Activated CD4-positive, alpha-beta memory T cell treated with anti-CD3 and anti-CD28 coated beads for 36 hours (primary cell): ENCODE measurements at regions of chr1 and their contacts with region 1.

Region 1: DNA sequence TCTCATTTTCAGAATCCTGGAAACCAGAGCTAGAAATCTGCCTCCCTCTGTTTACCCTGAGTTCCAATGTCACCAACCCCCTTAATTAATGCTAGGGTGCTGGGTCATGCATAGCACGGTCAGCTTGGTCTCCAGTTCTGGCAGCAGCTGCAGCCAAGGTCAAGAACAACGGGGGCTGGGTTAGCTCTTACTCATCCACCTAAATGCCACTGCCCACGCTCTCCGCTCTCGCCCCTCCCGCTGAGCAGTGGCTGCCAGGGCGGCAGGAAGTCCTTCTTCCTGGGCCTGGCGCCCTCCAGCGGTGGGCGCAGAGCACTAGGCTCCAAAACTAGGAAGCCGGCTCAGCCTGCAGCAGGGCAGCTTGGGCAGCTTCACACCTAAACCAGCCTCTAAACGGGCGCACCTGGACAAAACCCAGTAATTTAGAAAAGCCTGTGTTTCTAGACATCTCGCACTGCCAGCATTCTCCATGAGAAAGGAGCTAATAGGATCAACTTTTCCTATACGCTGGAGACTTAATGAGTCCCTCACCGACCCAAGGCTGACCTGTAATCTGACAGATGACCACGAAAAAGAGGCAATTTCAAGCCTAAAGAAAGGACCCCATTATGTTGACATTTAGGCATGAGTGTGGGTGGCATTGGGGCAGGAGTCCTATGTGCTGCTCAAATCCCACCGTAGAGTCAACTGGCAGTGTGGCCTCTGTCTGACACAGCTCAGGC is 78.3 kb upstream of the LRRN2 start:
- DNase-seq: peak; percentile 88
- H3K4me3 Mint-ChIP-seq: no peak overlapping the region
- H3K27ac Mint-ChIP-seq: no peak overlapping the region
- H3K4me1 Mint-ChIP-seq: peaks cover 6% of the 10 kb centered on the region
- H3K27me3 Mint-ChIP-seq: peaks cover 9% of the 10 kb centered on the region

Region 2: DNA sequence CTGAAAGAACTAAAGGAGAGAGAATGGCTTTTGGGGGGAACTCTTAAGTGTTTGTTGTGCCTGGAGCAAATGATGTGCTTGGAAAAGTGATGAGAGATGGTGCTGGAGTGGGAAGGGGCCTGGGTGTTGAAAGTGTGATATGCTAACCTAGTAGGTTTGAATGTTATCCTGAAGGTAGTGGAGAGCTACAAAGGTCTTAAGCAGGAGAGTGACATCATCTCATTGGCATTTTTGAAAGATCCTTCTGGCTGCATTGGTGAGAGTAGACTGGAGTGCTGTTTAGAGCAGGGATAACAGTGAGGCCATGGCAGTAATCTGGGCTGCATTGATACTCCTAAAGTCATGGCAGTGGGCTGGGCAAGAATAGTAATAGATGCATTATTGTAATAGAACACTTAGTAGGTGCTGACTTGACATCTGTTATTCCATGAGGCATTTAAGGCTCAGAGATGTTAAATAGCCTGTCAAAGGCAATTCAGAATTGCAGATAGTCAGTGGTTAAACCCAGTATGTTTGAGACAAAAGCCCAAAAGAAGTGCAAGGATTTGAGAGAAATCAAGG is 203.2 kb before region 1 on chr1:
- CTCF ChIA-PET with region 1: interaction called, 100 read pairs
- POLR2A ChIA-PET with region 1: no interaction called
- intact Hi-C with region 1: no loop called
- DNase-seq: no peak
- H3K4me3 Mint-ChIP-seq: no peak overlapping the region
- H3K27ac Mint-ChIP-seq: no peak overlapping the region
- H3K4me1 Mint-ChIP-seq: peaks cover 56% of the 10 kb centered on the region
- H3K27me3 Mint-ChIP-seq: no peaks in the 10 kb centered on the region

Region 3: DNA sequence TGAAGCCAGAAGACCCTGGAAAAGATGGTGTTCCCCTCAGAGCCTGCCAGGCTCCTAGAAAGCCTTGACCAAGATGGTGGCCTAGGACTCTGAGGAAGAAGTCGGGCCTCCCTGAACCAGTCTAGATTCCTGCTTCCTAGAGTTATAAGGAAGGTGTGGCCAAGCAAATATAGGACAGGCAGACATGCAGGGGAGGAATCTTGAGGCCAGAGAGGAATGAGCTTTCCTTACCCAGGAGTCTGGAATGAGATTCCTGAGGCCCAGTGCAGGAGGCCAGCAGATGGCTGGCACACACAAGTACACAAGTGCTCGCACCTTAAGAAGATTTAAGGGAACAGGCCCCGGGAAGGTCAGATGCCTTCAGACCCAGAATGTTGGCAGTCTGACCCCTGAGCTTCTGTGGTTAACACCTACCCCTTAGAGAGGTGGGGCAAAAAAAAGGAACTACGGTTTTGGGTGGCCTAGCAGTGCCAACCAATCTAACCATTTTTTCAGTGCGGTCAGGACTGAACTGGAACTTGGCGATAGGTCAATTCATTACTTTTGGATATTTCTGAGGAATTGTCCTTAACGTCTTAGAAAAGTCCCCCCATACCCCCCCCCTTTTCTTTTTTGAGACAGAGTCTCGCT is 174.3 kb before region 1 on chr1:
- CTCF ChIA-PET with region 1: no interaction called
- POLR2A ChIA-PET with region 1: no interaction called
- intact Hi-C with region 1: no loop called
- DNase-seq: no peak
- H3K4me3 Mint-ChIP-seq: no peak overlapping the region
- H3K27ac Mint-ChIP-seq: no peak overlapping the region
- H3K4me1 Mint-ChIP-seq: peaks cover 2% of the 10 kb centered on the region
- H3K27me3 Mint-ChIP-seq: no peaks in the 10 kb centered on the region

Region 4: GRCh38 chr1:204746838-204747442 is 16.9 kb before region 1 on chr1:
- CTCF ChIA-PET with region 1: interaction called, 32 read pairs
- POLR2A ChIA-PET with region 1: no interaction called
- intact Hi-C with region 1: no loop called
- DNase-seq: peak; percentile 62
- H3K4me3 Mint-ChIP-seq: no peak overlapping the region
- H3K27ac Mint-ChIP-seq: no peak overlapping the region
- H3K4me1 Mint-ChIP-seq: no peaks in the 10 kb centered on the region
- H3K27me3 Mint-ChIP-seq: peaks cover 23% of the 10 kb centered on the region

Region 5: GRCh38 chr1:204751894-204752687 is 11.8 kb before region 1 on chr1:
- CTCF ChIA-PET with region 1: interaction called, 32 read pairs
- POLR2A ChIA-PET with region 1: no interaction called
- intact Hi-C with region 1: no loop called
- DNase-seq: no peak
- H3K4me3 Mint-ChIP-seq: no peak overlapping the region
- H3K27ac Mint-ChIP-seq: no peak overlapping the region
- H3K4me1 Mint-ChIP-seq: no peaks in the 10 kb centered on the region
- H3K27me3 Mint-ChIP-seq: peaks cover 3% of the 10 kb centered on the region

Region 6: GRCh38 chr1:204791453-204792353 is 27.8 kb after region 1 on chr1:
- CTCF ChIA-PET with region 1: interaction called, 26 read pairs
- POLR2A ChIA-PET with region 1: no interaction called
- intact Hi-C with region 1: no loop called
- DNase-seq: peak; percentile 86
- H3K4me3 Mint-ChIP-seq: no peak overlapping the region
- H3K27ac Mint-ChIP-seq: no peak overlapping the region
- H3K4me1 Mint-ChIP-seq: no peaks in the 10 kb centered on the region
- H3K27me3 Mint-ChIP-seq: peaks cover 23% of the 10 kb centered on the region